A673 (cell line): ENCODE measurements at regions of chr6 and their contacts with region 1.

Region 1: DNA sequence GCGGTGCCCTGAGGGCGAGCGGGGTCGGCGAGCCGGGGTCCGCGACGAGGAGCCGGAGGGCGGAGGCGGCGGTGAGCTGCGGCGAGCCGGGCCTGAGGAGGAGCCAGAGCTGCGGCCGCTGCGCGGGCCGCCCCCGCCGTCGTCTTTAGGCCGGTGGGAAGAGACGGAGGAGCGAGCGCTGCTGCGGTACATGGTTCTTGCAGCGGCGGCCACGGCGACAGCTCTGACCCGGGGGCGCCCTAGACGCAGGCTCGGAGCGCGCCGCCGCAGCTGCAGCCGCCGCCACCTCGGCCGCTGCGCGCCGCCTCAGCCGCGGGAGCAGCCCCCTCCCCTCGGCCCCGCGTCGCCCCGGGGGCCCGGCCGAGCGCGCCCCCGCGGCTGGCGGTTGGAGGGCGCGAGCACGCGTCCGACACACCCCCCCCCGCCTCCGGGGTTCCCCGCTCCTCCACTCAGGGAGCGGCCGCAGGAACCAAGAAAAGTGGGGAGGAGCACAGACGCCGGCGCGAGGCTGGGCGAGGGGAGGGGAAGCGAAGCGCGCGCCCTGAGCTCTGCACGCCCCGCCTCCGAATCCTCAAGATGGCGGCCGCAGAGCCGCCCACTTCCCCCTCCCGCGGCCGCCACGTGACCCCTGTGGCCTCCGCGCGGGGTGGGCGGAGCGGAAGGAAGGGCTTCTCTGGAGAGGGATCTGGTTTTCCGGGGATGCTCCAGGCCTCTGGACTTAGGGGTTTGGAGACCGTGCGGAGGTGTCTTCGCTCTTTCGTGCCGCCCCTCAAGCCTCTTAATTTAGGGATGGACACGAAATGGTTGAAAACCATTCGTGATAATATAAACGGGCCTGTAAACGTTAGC is at the start of gene ZNF318:
- DNase-seq: peak; percentile 99
- H3K4me3 ChIP-seq: peak within 1 kb of the TSS; percentile 98
- H3K27ac ChIP-seq: peak within 1 kb of the TSS; percentile 81
- H3K4me1 ChIP-seq: peaks cover 5% of the 10 kb centered on the region
- H3K27me3 ChIP-seq: no peaks in the 10 kb centered on the region
- CTCF ChIP-seq: no peak
- total RNA-seq, gene ZNF318: 22.6 and 23.8 TPM in 2 replicates

Region 2: DNA sequence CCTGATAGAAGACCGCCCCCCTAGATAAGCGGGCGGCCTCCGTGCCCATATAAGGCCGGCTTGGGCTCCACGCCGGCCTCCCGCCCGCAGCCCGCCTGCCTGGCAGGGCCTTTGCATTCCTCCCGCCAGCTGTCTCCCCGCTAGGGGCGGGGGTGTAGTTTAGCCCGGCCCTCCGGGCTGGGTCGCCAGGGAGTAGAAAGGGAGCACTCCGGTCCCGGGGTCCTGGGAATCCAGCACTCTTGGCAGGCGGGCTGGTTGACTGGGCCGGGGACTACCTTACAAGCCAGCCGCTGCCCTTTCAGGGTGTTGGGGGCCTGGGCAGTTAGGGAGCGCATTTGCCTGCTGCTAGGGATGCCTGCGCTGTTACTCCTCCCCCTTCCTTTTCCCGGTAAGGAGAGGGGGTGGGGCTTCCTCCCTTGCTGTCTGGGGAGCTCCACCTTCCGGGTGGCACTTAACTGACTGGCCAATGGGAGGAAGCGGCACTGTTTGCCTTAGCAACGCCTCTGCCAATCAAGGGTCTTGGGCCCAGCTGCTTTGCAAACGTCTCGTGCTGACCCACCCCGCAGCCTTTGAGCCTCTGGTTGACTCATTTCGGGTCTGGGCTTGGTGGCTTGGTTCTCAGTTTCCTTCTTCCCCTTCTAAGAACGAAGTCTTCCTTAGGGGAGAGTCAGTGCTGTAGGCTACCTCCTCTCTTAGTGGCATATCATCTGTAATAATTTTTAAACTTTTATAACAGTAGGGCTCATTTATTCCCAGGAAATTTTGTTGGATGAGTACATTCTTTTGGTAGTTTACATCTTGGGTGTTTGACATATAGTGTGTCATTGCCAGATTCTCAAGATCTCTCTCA is 194.9 kb before region 1 on chr6:
- CTCF ChIA-PET with region 1: no interaction called
- POLR2A ChIA-PET with region 1: no interaction called
- intact Hi-C with region 1: loop called (anchors 5 kb)
- DNase-seq: peak; percentile 99
- H3K4me3 ChIP-seq: peak overlapping the region; percentile 43
- H3K27ac ChIP-seq: peak overlapping the region; percentile 94
- H3K4me1 ChIP-seq: peaks cover 27% of the 10 kb centered on the region
- H3K27me3 ChIP-seq: no peaks in the 10 kb centered on the region
- CTCF ChIP-seq: 0 out of 2 replicates have a peak, but pooled peaks have one; percentile 19